ENCODE measurements at regions of chr1 and their contacts with region 1.

Region 1: GRCh38 chr1:183281553-183282091 is 95.6 kb downstream of the LAMC2 start:
- DNase-seq: peak; percentile 86
- ATAC-seq: peak; percentile 86
- H3K4me3 Mint-ChIP-seq: no peak overlapping the region
- H3K27ac Mint-ChIP-seq: no peak overlapping the region
- H3K4me1 Mint-ChIP-seq: no peaks in the 10 kb centered on the region
- H3K27me3 Mint-ChIP-seq: peaks cover 7% of the 10 kb centered on the region

Region 2: GRCh38 chr1:182962554-182963115 is 319.0 kb before region 1 on chr1:
- CTCF ChIA-PET with region 1: interaction called, 3 read pairs
- POLR2A ChIA-PET with region 1: no interaction called
- intact Hi-C with region 1: loop called in 1 of 2 experiments (anchors 5 kb)
- DNase-seq: peak; percentile 60
- ATAC-seq: peak; percentile 92
- H3K4me3 Mint-ChIP-seq: no peak overlapping the region
- H3K27ac Mint-ChIP-seq: no peak overlapping the region
- H3K4me1 Mint-ChIP-seq: no peaks in the 10 kb centered on the region
- H3K27me3 Mint-ChIP-seq: peaks cover 9% of the 10 kb centered on the region

Region 3: GRCh38 chr1:183461350-183461749 is 179.7 kb after region 1 on chr1:
- CTCF ChIA-PET with region 1: no interaction called
- POLR2A ChIA-PET with region 1: no interaction called
- intact Hi-C with region 1: loop called in 1 of 2 experiments (anchors 10 kb)
- DNase-seq: no peak
- ATAC-seq: no peak
- H3K4me3 Mint-ChIP-seq: no peak overlapping the region
- H3K27ac Mint-ChIP-seq: no peak overlapping the region
- H3K4me1 Mint-ChIP-seq: no peaks in the 10 kb centered on the region
- H3K27me3 Mint-ChIP-seq: peaks cover 22% of the 10 kb centered on the region

Region 4: GRCh38 chr1:183543619-183544204 is 262.1 kb after region 1 on chr1:
- CTCF ChIA-PET with region 1: no interaction called
- POLR2A ChIA-PET with region 1: no interaction called
- intact Hi-C with region 1: loop called in 1 of 2 experiments (anchors 2 kb)
- DNase-seq: no peak
- ATAC-seq: peak; percentile 91
- H3K4me3 Mint-ChIP-seq: no peak overlapping the region
- H3K27ac Mint-ChIP-seq: peak overlapping the region; percentile 63
- H3K4me1 Mint-ChIP-seq: peaks cover 2% of the 10 kb centered on the region
- H3K27me3 Mint-ChIP-seq: no peaks in the 10 kb centered on the region

Region 5: GRCh38 chr1:183622884-183623785 is 341.5 kb after region 1 on chr1:
- CTCF ChIA-PET with region 1: no interaction called
- POLR2A ChIA-PET with region 1: no interaction called
- intact Hi-C with region 1: loop called (anchors 1 kb)
- DNase-seq: peak; percentile 71
- ATAC-seq: peak; percentile 97
- H3K4me3 Mint-ChIP-seq: no peak overlapping the region
- H3K27ac Mint-ChIP-seq: peak overlapping the region; percentile 22
- H3K4me1 Mint-ChIP-seq: peaks cover 17% of the 10 kb centered on the region
- H3K27me3 Mint-ChIP-seq: no peaks in the 10 kb centered on the region

Region 6: GRCh38 chr1:183685112-183685713 is 403.6 kb after region 1 on chr1:
- CTCF ChIA-PET with region 1: interaction called, 4 read pairs
- POLR2A ChIA-PET with region 1: no interaction called
- intact Hi-C with region 1: loop called (anchors 1 to 5 kb)
- DNase-seq: peak; percentile 30
- ATAC-seq: peak; percentile 66
- H3K4me3 Mint-ChIP-seq: no peak overlapping the region
- H3K27ac Mint-ChIP-seq: no peak overlapping the region
- H3K4me1 Mint-ChIP-seq: peaks cover 7% of the 10 kb centered on the region
- H3K27me3 Mint-ChIP-seq: peaks cover 4% of the 10 kb centered on the region

Measured in activated CD4-positive, alpha-beta T cell treated with anti-CD3 and anti-CD28 coated beads for 36 hours (primary cell).